CD14-positive monocyte (primary cell): ENCODE measurements at regions of chr4 and their contacts with region 1.

Region 1: GRCh38 chr4:6926681-6927478 is 17.3 kb downstream of the TBC1D14 start:
- DNase-seq: no peak
- H3K4me3 ChIP-seq: peak overlapping the region in 1 of 3 experiments; percentile 65
- H3K4me3 Mint-ChIP-seq: peak overlapping the region; percentile 28 to 81
- H3K27ac ChIP-seq: peak overlapping the region; percentile 54 to 80
- H3K27ac Mint-ChIP-seq: peak overlapping the region; percentile 85 to 95 (median 91)
- H3K4me1 ChIP-seq: peaks cover 74% of the 10 kb centered on the region in 2 donors
- H3K4me1 Mint-ChIP-seq: peaks cover 91% of the 10 kb centered on the region
- H3K27me3 ChIP-seq: no peaks in the 10 kb centered on the region
- H3K27me3 Mint-ChIP-seq: no peaks in the 10 kb centered on the region
- CTCF ChIP-seq: no peak

Region 2: DNA sequence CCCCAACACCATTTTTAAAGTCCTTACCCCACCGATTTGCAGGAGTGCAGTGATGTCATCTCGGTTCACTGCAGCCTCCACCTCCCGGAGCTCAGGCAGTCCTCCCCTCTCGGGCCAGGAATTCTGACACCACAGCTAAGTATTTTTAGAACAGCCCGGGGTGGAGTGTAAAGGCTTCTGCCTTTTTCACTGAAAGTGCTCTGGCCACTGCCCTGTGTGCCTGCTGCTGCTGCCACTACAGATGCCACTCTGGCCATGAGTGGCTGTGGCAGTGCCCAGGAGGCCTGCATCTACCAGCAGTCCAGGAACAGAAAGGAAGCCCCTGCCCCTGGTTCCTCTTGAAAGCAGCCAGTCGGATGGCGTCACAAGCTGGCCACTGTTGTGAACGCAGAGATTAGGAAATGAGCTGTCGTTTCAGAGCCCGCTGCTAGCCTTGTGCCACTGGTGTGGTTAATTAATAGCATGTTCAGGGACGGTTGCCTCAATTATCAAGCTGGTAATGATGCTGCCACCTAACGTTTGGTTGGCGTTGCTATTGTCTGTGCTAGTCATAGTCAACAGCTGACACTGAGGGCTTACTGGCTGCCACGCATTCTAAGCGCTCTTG is 40.8 kb before region 1 on chr4:
- intact Hi-C with region 1: loop called in 1 of 2 experiments (anchors 5 kb)
- DNase-seq: peak; percentile 95 to 98 (median 95)
- H3K4me3 ChIP-seq: peak overlapping the region in 1 of 3 experiments; percentile 60
- H3K4me3 Mint-ChIP-seq: peak overlapping the region; percentile 55 to 63
- H3K27ac ChIP-seq: peak overlapping the region; percentile 71 to 92
- H3K27ac Mint-ChIP-seq: peak overlapping the region; percentile 93 to 99 (median 97)
- H3K4me1 ChIP-seq: peaks cover 49 to 54% of the 10 kb centered on the region in 2 donors
- H3K4me1 Mint-ChIP-seq: peaks cover 50% of the 10 kb centered on the region
- H3K27me3 ChIP-seq: no peaks in the 10 kb centered on the region
- H3K27me3 Mint-ChIP-seq: peaks cover 0 to 2% (median 1%) of the 10 kb centered on the region in 3 donors
- CTCF ChIP-seq: peak; percentile 50

Region 3: GRCh38 chr4:6963139-6963611 is 36.3 kb after region 1 on chr4:
- intact Hi-C with region 1: no loop called
- DNase-seq: peak in 1 of 3 donors; percentile 20
- H3K4me3 ChIP-seq: peak overlapping the region in 1 of 3 experiments; percentile 67
- H3K4me3 Mint-ChIP-seq: no peak overlapping the region
- H3K27ac ChIP-seq: peak overlapping the region in 1 of 2 donors; percentile 70
- H3K27ac Mint-ChIP-seq: peak overlapping the region in 5 of 7 donors; percentile 41 to 86 (median 64)
- H3K4me1 ChIP-seq: peaks cover 37% of the 10 kb centered on the region in 2 donors
- H3K4me1 Mint-ChIP-seq: peaks cover 52% of the 10 kb centered on the region
- H3K27me3 ChIP-seq: no peaks in the 10 kb centered on the region
- H3K27me3 Mint-ChIP-seq: no peaks in the 10 kb centered on the region
- CTCF ChIP-seq: no peak